ENCODE measurements at regions of chr15 and their contacts with region 1.

Region 1: DNA sequence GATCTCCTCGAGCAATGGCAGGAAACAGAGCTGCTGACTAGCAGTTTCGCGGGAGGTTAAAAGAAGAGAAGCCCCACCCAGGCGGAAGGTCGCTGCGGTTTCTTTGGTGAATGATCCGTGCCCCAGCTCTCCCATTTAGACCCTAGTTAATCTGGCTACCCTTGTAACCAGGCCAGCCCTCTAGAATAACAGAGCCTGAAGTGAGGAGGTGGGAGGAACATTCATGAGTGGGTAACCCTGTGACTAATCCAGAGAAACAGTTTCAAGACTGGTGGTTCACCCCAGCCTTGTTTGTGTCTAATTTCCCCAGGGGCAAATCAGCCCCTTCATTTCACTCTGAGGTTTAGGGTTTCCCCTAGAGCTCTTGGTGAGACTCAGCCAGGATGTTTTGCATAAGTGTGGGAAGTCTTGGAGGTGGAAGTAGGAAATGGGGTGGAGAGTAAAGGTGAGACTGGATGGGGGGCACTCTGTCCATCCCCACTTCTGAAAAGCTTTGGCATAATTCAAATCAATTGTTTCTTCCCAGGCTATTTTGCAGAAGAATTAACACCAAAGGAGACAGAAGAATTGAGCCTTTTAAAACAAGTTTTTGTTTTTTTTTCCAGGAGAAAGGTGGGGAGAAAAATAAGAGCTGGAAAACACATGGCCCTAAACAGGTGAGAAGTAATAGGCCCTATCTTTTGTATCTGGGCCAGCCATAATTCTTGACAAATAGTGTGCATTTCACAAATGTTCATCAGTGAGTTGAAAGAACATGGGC is 303.1 kb downstream of the RPLP1 start:
- DNase-seq: peak; percentile 88
- H3K4me3 Mint-ChIP-seq: peak overlapping the region; percentile 47
- H3K27ac Mint-ChIP-seq: peak overlapping the region; percentile 80
- H3K4me1 Mint-ChIP-seq: peaks cover 72% of the 10 kb centered on the region
- H3K27me3 Mint-ChIP-seq: peaks cover 23% of the 10 kb centered on the region

Region 2: GRCh38 chr15:69713726-69714559 is 41.8 kb before region 1 on chr15:
- CTCF ChIA-PET with region 1: interaction called, 5 read pairs
- POLR2A ChIA-PET with region 1: interaction called, 38 read pairs
- DNase-seq: peak; percentile 88
- H3K4me3 Mint-ChIP-seq: peak overlapping the region; percentile 0
- H3K27ac Mint-ChIP-seq: peak overlapping the region; percentile 66
- H3K4me1 Mint-ChIP-seq: peaks cover 53% of the 10 kb centered on the region
- H3K27me3 Mint-ChIP-seq: peaks cover 61% of the 10 kb centered on the region

Region 3: GRCh38 chr15:69743091-69743490 is 12.6 kb before region 1 on chr15:
- CTCF ChIA-PET with region 1: interaction called, 3 read pairs
- POLR2A ChIA-PET with region 1: interaction called, 17 read pairs
- DNase-seq: no peak
- H3K4me3 Mint-ChIP-seq: no peak overlapping the region
- H3K27ac Mint-ChIP-seq: no peak overlapping the region
- H3K4me1 Mint-ChIP-seq: peaks cover 21% of the 10 kb centered on the region
- H3K27me3 Mint-ChIP-seq: peaks cover 38% of the 10 kb centered on the region